ENCODE measurements at regions of chr15 and their contacts with region 1.

Region 1: DNA sequence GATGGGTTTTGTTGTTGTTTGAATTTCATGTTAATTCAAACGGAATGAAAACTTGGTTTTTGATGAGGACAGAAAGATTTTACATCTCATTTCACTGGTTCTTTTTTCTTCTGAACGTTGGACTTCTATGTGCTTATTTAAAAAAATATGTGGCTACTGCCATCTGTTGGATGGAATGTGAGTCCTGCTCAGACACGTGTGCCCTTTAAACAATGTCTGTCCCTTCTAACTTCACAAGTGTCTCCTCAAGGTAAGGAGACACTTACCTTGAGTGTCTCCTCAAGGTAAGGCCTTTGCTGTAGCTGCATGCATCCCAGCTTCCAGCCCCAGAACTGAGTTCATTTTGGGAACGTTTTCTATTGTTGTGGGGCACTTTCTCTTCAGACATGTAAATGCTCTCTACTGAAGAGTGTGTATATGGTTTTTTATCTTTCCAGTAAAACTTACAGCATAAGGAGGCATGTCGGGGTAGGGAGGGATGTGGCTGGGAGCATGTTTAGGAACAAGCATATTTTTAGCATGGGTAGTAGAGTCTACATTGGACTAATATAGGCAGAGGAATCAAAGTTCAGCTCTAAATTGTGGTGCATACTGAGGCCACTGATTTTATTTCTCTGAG is 63.1 kb upstream of the UBE3A start:
- DNase-seq: peak; percentile 20
- H3K4me3 ChIP-seq: no peak overlapping the region
- H3K27ac ChIP-seq: no peak overlapping the region
- H3K4me1 ChIP-seq: no peaks in the 10 kb centered on the region; a peak in 1 of 4 replicates
- H3K27me3 ChIP-seq: no peaks in the 10 kb centered on the region
- CTCF ChIP-seq: peak; percentile 59
- EP300 ChIP-seq: no peak
- RAD21 ChIP-seq: peak; percentile 73

Region 2: GRCh38 chr15:25481207-25481859 is 20.6 kb before region 1 on chr15:
- CTCF ChIA-PET with region 1: interaction called, 12 read pairs
- POLR2A ChIA-PET with region 1: no interaction called
- DNase-seq: peak; percentile 36
- H3K4me3 ChIP-seq: no peak overlapping the region; a peak in 1 of 4 replicates
- H3K27ac ChIP-seq: peak overlapping the region in 1 of 2 experiments; percentile 36; a peak in 1 of 4 replicates
- H3K4me1 ChIP-seq: peaks cover 0 to 9% of the 10 kb centered on the region in 2 experiments; a peak in 1 of 4 replicates
- H3K27me3 ChIP-seq: no peaks in the 10 kb centered on the region
- CTCF ChIP-seq: no peak
- EP300 ChIP-seq: no peak
- RAD21 ChIP-seq: no peak

Region 3: GRCh38 chr15:26891448-26892181 is 1389.7 kb after region 1 on chr15:
- CTCF ChIA-PET with region 1: no interaction called
- POLR2A ChIA-PET with region 1: no interaction called
- DNase-seq: peak; percentile 83
- H3K4me3 ChIP-seq: peak overlapping the region; percentile 31 to 55; a peak in 3 of 4 replicates
- H3K27ac ChIP-seq: no peak overlapping the region
- H3K4me1 ChIP-seq: peaks cover 0 to 5% of the 10 kb centered on the region in 2 experiments; a peak in 2 of 4 replicates
- H3K27me3 ChIP-seq: no peaks in the 10 kb centered on the region
- CTCF ChIP-seq: peak; percentile 71
- EP300 ChIP-seq: no peak
- RAD21 ChIP-seq: peak; percentile 93